ENCODE measurements at regions of chr12 and their contacts with region 1.

Region 1: DNA sequence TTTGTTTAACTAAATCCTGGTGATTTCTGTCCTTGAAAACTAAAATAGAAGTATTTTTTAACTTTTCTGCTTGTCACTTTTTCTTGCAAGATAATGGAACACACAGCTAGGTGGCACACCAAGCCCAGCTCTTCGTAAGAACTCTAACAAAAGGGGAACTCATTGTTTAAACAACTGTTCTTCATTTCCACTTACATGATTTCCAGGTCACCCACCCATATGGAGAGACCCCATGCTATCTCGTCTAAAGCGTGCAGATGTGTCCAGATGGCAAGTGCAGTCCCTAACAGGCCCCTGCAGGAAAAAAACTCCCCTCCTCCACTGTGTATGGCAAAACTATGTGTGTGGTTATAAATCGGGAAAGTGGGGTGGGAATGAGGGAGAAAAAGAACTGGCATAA is 43.3 kb upstream of the NT5DC3 start:
- DNase-seq: no peak
- ATAC-seq: peak in 1 of 4 donors; percentile 54
- H3K4me3 ChIP-seq: no peak overlapping the region
- H3K27ac ChIP-seq: no peak overlapping the region
- H3K4me1 ChIP-seq: no peaks in the 10 kb centered on the region
- H3K27me3 ChIP-seq: no peaks in the 10 kb centered on the region
- CTCF ChIP-seq: peak; percentile 44

Region 2: DNA sequence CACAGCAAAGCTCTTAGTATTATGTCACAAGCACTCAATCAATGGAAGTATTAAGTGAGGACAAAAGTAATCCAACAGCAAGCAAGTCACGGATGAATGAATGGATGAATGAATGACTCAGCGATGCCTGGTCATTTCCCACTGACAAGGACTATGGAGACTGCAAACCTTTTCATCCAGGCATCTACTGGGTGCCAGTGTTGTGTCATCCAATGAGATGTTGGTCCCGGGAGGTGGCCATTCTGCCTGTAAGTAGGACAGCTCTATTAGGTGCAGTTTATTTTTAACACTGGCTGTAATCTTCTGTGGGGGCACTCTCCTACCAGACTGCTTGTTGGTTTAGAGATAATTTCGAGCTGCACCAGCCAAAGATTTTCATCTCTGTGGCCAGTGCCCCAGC is 257.8 kb before region 1 on chr12:
- intact Hi-C with region 1: loop called in 1 of 2 experiments (anchors 5 kb)
- DNase-seq: peak; percentile 44 to 77
- ATAC-seq: peak; percentile 96 to 98 (median 96)
- H3K4me3 ChIP-seq: no peak overlapping the region
- H3K27ac ChIP-seq: peak overlapping the region; percentile 67
- H3K4me1 ChIP-seq: peaks cover 16% of the 10 kb centered on the region
- H3K27me3 ChIP-seq: no peaks in the 10 kb centered on the region
- CTCF ChIP-seq: peak; percentile 59